A549 (cell line): ENCODE measurements at regions of chr14 and their contacts with region 1.

Region 1: GRCh38 chr14:22478670-22479069 is 110.4 kb downstream of the DAD1 start:
- DNase-seq: no peak
- ATAC-seq: no peak
- H3K4me3 ChIP-seq: no peak overlapping the region
- H3K27ac ChIP-seq: no peak overlapping the region
- H3K4me1 ChIP-seq: no peaks in the 10 kb centered on the region
- CTCF ChIP-seq: no peak
- EP300 ChIP-seq: no peak
- POLR2A ChIP-seq: no peak
- RAD21 ChIP-seq: no peak

Region 2: DNA sequence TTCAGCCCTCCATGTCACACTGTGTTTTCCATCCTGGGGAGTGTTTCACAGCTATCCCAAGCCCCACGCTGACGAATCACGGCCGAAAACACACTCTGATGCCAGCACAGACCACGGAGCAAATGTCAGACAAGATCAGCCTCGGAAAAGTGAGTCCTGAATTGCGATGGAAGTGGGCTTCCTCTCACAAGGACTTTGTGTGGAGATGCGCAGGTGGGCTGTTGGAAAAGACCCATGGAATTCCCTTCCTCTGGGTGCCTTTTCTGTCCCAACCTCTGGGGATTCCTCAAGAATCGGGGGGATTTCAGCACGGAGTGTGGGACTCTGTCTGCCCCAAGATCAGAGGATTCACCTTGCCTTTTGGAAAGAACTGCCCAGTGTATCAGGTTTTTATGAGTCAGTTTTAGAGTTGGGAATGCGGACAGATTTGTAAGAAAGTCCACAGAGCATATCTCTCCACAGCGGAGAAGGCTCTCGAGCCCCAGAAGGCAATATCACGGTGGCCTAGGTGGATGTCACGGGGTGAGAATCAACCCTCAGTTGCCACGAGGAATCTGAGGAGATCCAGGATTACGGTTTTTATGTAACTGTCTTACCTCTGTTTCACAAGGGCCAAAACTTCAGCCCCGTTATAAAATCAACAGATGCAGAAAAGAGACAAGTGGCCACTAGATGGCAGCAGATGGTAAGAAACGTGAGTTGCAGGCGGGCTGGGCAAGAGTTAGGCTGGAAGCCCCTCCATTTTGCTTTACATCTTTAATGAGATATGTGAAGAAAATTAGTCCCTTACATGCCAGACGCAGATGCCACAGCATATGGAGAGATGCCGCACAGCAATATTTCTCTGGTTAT is 91.5 kb before region 1 on chr14:
- CTCF ChIA-PET with region 1: interaction called, 123 read pairs
- POLR2A ChIA-PET with region 1: no interaction called
- DNase-seq: peak; percentile 72 to 82
- ATAC-seq: peak; percentile 55 to 78; a peak in 4 of 6 replicates
- H3K4me3 ChIP-seq: no peak overlapping the region
- H3K27ac ChIP-seq: no peak overlapping the region
- H3K4me1 ChIP-seq: peaks cover 32% of the 10 kb centered on the region
- CTCF ChIP-seq: peak; percentile 90
- EP300 ChIP-seq: no peak
- POLR2A ChIP-seq: no peak
- RAD21 ChIP-seq: peak; percentile 92 to 93

Region 3: GRCh38 chr14:22449600-22449905 is 29.1 kb before region 1 on chr14:
- CTCF ChIA-PET with region 1: no interaction called
- POLR2A ChIA-PET with region 1: no interaction called
- DNase-seq: no peak
- ATAC-seq: no peak
- H3K4me3 ChIP-seq: no peak overlapping the region
- H3K27ac ChIP-seq: no peak overlapping the region
- H3K4me1 ChIP-seq: no peaks in the 10 kb centered on the region
- CTCF ChIP-seq: no peak
- EP300 ChIP-seq: no peak
- POLR2A ChIP-seq: no peak
- RAD21 ChIP-seq: no peak